ENCODE measurements at regions of chr6 and their contacts with region 1.

Region 1: DNA sequence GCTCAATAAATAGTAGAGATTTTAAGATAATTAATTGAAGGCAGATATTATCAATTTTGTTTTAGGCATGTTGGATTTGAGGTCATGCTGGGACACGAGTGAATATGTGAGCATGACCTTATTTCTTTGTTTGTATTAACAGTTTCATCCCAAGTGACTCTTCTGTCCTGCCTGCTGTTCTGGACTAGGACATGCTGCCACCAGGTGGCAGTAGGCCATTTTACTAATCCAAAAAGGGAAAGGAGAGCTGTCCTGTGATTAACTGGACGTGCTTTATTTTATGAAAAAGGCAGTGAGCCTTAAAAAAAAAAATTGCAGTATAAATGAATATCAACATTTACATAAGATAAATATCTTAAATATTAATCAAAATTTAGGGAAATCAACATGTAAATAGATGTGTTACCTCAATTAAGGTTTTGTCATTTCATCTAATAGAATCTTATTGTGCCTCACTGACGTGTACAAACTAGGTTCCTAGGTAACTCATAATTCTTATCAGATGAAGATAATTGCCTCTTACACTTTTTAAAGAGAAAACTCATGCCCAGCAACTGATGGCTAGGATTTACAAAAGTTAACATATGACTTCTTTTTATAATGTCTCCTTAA is 49.8 kb downstream of the FRK start:
- DNase-seq: no peak
- H3K4me3 ChIP-seq: no peak overlapping the region
- H3K27ac ChIP-seq: no peak overlapping the region
- H3K4me1 ChIP-seq: peaks cover 13% of the 10 kb centered on the region
- H3K27me3 ChIP-seq: no peaks in the 10 kb centered on the region
- CTCF ChIP-seq: peak; percentile 52 to 60 (median 57)
- POLR2A ChIP-seq: no peak

Region 2: DNA sequence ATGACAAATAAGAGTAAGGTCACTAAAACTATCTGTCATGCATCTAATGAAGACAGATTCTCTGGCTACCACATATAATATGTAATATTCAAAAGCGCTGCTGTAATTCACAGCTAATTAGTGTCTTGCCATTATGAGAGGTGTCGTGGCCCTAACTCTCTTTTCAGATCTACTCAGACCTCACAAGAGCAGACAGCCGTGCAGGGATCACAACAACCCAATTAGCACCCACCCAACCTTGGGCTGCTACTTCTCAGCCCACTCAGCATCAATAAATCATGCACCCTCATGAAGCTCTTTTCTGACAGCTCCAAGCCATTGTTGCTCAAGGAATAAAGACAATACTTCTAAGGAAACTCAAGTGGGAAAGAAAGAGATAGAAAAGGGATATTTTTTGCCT is 11.7 kb before region 1 on chr6:
- intact Hi-C with region 1: no loop called
- DNase-seq: no peak
- H3K4me3 ChIP-seq: no peak overlapping the region
- H3K27ac ChIP-seq: no peak overlapping the region
- H3K4me1 ChIP-seq: no peaks in the 10 kb centered on the region
- H3K27me3 ChIP-seq: no peaks in the 10 kb centered on the region
- CTCF ChIP-seq: no peak
- POLR2A ChIP-seq: no peak

Region 3: GRCh38 chr6:116096979-116097816 is 86.3 kb after region 1 on chr6:
- intact Hi-C with region 1: loop called (anchors 10 kb)
- DNase-seq: no peak
- H3K4me3 ChIP-seq: no peak overlapping the region
- H3K27ac ChIP-seq: no peak overlapping the region
- H3K4me1 ChIP-seq: peaks cover 8% of the 10 kb centered on the region
- H3K27me3 ChIP-seq: no peaks in the 10 kb centered on the region
- CTCF ChIP-seq: no peak
- POLR2A ChIP-seq: no peak

Measured in vagina (tissue), 2 donors.